Heart right ventricle (tissue), 16 donors: ENCODE measurements at regions of chr11 and their contacts with region 1.

Region 1: GRCh38 chr11:17354601-17354991 is 3.0 kb downstream of the NCR3LG1 start:
- DNase-seq: peak in 1 of 2 donors; percentile 79
- ATAC-seq: peak in 5 of 8 donors; percentile 44 to 76 (median 59)
- H3K4me3 ChIP-seq: peak overlapping the region in 2 of 10 donors; percentile 72 to 74
- H3K27ac ChIP-seq: no peak overlapping the region
- H3K4me1 ChIP-seq: peaks cover 0 to 34% (median 16%) of the 10 kb centered on the region in 9 donors
- H3K27me3 ChIP-seq: peaks cover 0 to 4% (median 0%) of the 10 kb centered on the region in 7 donors
- CTCF ChIP-seq: peak; percentile 53 to 79 (median 69)

Region 2: GRCh38 chr11:17230867-17231851 is 123.4 kb before region 1 on chr11:
- intact Hi-C with region 1: loop called in 1 of 10 experiments (anchors 5 kb)
- DNase-seq: no peak
- ATAC-seq: no peak
- H3K4me3 ChIP-seq: no peak overlapping the region
- H3K27ac ChIP-seq: no peak overlapping the region
- H3K4me1 ChIP-seq: peaks cover 0 to 12% (median 0%) of the 10 kb centered on the region in 9 donors
- H3K27me3 ChIP-seq: no peaks in the 10 kb centered on the region
- CTCF ChIP-seq: no peak

Region 3: GRCh38 chr11:17276236-17277023 is 78.2 kb before region 1 on chr11 and contains the start of gene NUCB2:
- intact Hi-C with region 1: loop called in 2 of 10 experiments (anchors 5 kb)
- DNase-seq: peak; percentile 97 to 98
- ATAC-seq: peak; percentile 99
- H3K4me3 ChIP-seq: peak within 1 kb of the TSS; percentile 55 to 96 (median 91)
- H3K27ac ChIP-seq: peak within 1 kb of the TSS; percentile 87 to 97 (median 92)
- H3K4me1 ChIP-seq: peaks cover 0 to 39% (median 14%) of the 10 kb centered on the region in 9 donors
- H3K27me3 ChIP-seq: no peaks in the 10 kb centered on the region
- CTCF ChIP-seq: peak in 1 of 9 donors; percentile 8
- total RNA-seq, gene NUCB2: 78.8 to 175 (median 99.8) TPM

Region 4: GRCh38 chr11:17384002-17384511 is 29.5 kb after region 1 on chr11:
- intact Hi-C with region 1: no loop called
- DNase-seq: peak; percentile 78 to 83
- ATAC-seq: peak; percentile 23 to 60 (median 48)
- H3K4me3 ChIP-seq: no peak overlapping the region
- H3K27ac ChIP-seq: no peak overlapping the region
- H3K4me1 ChIP-seq: peaks cover 0 to 37% (median 8%) of the 10 kb centered on the region in 9 donors
- H3K27me3 ChIP-seq: peaks cover 0 to 15% (median 13%) of the 10 kb centered on the region in 7 donors
- CTCF ChIP-seq: peak; percentile 86 to 97 (median 93)

Region 5: GRCh38 chr11:17498475-17498874 is 143.9 kb after region 1 on chr11:
- intact Hi-C with region 1: no loop called
- DNase-seq: no peak
- ATAC-seq: no peak
- H3K4me3 ChIP-seq: no peak overlapping the region
- H3K27ac ChIP-seq: no peak overlapping the region
- H3K4me1 ChIP-seq: peaks cover 0 to 5% (median 0%) of the 10 kb centered on the region in 9 donors
- H3K27me3 ChIP-seq: peaks cover 0 to 16% (median 0%) of the 10 kb centered on the region in 7 donors
- CTCF ChIP-seq: no peak